B cell (primary cell): ENCODE measurements at regions of chr3 and their contacts with region 1.

Region 1: DNA sequence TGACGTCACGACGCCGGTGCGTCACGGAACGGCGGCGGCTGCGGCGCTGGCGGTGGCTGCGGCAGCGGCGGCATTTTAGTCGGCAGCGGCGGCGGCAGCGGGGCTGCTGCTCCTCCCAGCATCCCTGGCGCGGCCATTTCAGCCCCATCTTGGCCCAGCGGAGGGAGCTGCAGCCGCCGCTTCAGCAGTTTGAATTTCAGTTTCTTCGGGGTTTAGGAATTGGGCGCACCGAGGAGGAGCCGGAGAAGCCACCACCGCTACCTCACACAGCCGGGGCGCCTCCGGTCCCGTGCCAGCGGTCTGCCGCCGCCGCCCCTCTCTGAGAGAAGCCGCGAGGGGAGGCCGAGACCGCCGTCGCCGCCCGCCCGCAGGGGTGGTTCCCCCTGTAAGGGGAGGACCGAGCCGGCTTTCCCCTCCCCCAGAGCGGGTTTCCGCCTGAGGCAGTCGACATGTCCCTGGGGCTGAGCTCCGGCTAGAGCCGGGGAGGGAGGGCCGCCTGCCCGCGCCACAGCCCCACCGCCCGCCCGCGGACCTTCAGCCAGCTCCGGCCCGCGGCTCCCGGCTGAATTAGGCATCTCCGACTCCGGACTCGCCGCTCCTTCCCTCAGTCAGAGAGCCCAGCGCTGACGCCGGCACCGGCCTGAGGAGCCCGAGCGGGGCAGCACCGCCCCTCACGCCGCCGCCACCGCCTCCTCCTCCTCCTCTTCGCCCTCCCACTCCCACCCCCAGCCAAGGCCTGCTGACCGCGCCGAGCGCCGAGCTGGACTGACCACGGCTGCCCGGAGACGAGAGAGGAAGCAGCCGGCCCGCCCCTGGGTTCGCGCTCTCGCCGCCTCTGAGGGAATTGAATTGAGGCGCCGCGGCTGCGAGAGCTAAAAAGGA is at the start of gene TSC22D2:
- DNase-seq: peak; percentile 98
- ATAC-seq: peak; percentile 73
- H3K4me3 ChIP-seq: peak within 1 kb of the TSS; percentile 66 to 88 (median 77)
- H3K4me3 Mint-ChIP-seq: peak within 1 kb of the TSS; percentile 87
- H3K27ac ChIP-seq: peak within 1 kb of the TSS; percentile 91 to 99
- H3K27ac Mint-ChIP-seq: peak within 1 kb of the TSS; percentile 94
- H3K4me1 ChIP-seq: peaks cover 21 to 25% of the 10 kb centered on the region in 2 donors
- H3K4me1 Mint-ChIP-seq: peaks cover 33% of the 10 kb centered on the region
- H3K27me3 ChIP-seq: no peaks in the 10 kb centered on the region
- H3K27me3 Mint-ChIP-seq: no peaks in the 10 kb centered on the region
- CTCF ChIP-seq: no peak
- total RNA-seq, gene TSC22D2: 45.9 and 48.5 TPM in 2 replicates

Region 2: DNA sequence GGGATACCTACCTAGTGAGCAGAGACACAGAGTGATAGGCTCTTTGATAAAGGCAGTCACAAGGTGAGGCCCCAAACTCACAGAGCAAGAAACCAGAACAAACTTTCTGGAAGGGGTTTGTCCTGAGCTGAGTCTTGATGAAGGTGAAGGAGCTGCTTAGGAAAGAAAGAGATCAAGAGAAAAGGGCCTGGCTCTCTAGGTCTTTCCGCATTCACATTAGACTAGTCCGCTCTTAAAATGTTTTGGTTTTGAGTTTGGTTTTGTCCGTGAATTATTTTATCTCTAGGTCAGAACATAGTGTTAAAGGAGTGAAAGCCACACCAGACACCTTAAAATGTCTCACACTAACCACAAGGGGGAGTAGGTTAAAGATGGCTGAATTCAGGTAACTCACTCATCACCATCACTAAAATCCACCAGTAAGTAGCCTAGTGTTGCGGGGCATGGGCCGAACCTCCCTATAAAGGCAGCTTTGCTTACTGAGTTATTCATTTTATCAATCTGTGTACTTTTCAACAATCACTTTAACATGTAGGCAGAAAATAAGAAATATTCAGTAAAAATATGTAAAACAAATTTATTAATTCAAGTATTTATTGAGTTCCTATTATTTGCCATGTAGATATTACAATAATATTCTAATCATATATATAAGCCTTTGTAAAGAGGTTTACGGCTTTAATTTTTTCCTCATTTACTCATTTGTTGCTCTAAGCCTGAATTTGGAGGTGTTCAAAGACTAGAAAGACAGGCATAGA is 121.9 kb before region 1 on chr3:
- CTCF ChIA-PET with region 1: interaction called, 11 read pairs
- POLR2A ChIA-PET with region 1: no interaction called
- intact Hi-C with region 1: loop called (anchors 1 kb)
- DNase-seq: peak; percentile 68
- ATAC-seq: peak; percentile 79
- H3K4me3 ChIP-seq: no peak overlapping the region
- H3K4me3 Mint-ChIP-seq: no peak overlapping the region
- H3K27ac ChIP-seq: no peak overlapping the region
- H3K27ac Mint-ChIP-seq: no peak overlapping the region
- H3K4me1 ChIP-seq: no peaks in the 10 kb centered on the region
- H3K4me1 Mint-ChIP-seq: no peaks in the 10 kb centered on the region
- H3K27me3 ChIP-seq: no peaks in the 10 kb centered on the region
- H3K27me3 Mint-ChIP-seq: peaks cover 27% of the 10 kb centered on the region
- CTCF ChIP-seq: peak; percentile 73

Region 3: DNA sequence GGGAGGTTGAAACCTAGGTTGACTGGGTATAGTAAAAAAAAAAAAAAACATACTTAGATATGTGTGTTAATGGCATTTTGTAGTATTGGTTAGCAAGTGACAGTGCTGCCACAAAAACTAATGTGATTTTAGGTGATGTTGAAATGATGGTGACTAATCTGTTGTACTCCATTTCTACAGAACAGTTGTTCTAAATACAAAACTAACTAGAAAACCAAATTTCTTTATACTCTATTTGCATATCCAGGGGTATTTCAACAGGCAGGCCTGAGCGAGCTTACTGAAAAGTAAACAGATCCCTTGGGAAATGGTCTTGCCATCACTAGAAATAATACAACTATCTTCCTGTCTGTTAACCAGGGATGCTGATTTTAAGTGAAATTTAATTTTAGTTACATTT is 20.1 kb after region 1 on chr3:
- CTCF ChIA-PET with region 1: interaction called, 15 read pairs
- POLR2A ChIA-PET with region 1: interaction called, 3 read pairs
- intact Hi-C with region 1: no loop called
- DNase-seq: no peak
- ATAC-seq: no peak
- H3K4me3 ChIP-seq: no peak overlapping the region
- H3K4me3 Mint-ChIP-seq: no peak overlapping the region
- H3K27ac ChIP-seq: no peak overlapping the region
- H3K27ac Mint-ChIP-seq: no peak overlapping the region
- H3K4me1 ChIP-seq: peaks cover 19 to 32% of the 10 kb centered on the region in 2 donors
- H3K4me1 Mint-ChIP-seq: peaks cover 59% of the 10 kb centered on the region
- H3K27me3 ChIP-seq: no peaks in the 10 kb centered on the region
- H3K27me3 Mint-ChIP-seq: no peaks in the 10 kb centered on the region
- CTCF ChIP-seq: no peak

Region 4: GRCh38 chr3:150515210-150515609 is 106.7 kb after region 1 on chr3:
- CTCF ChIA-PET with region 1: no interaction called
- POLR2A ChIA-PET with region 1: no interaction called
- intact Hi-C with region 1: no loop called
- DNase-seq: no peak
- ATAC-seq: no peak
- H3K4me3 ChIP-seq: no peak overlapping the region
- H3K4me3 Mint-ChIP-seq: no peak overlapping the region
- H3K27ac ChIP-seq: no peak overlapping the region
- H3K27ac Mint-ChIP-seq: no peak overlapping the region
- H3K4me1 ChIP-seq: no peaks in the 10 kb centered on the region
- H3K4me1 Mint-ChIP-seq: no peaks in the 10 kb centered on the region
- H3K27me3 ChIP-seq: peaks cover 0 to 2% (median 0%) of the 10 kb centered on the region in 4 experiments
- H3K27me3 Mint-ChIP-seq: peaks cover 20% of the 10 kb centered on the region
- CTCF ChIP-seq: no peak

Region 5: GRCh38 chr3:150546226-150547044 is 138.0 kb after region 1 on chr3 and contains the starts of genes EIF2A and SERP1:
- CTCF ChIA-PET with region 1: interaction called, 9 read pairs
- POLR2A ChIA-PET with region 1: interaction called, 12 read pairs
- intact Hi-C with region 1: loop called (anchors 1 kb)
- DNase-seq: peak; percentile 100
- ATAC-seq: peak; percentile 90
- H3K4me3 ChIP-seq: peak within 1 kb of the TSS; percentile 67 to 96 (median 86)
- H3K4me3 Mint-ChIP-seq: peak within 1 kb of the TSS; percentile 93
- H3K27ac ChIP-seq: peak within 1 kb of the TSS; percentile 87 to 98
- H3K27ac Mint-ChIP-seq: peak within 1 kb of the TSS; percentile 99
- H3K4me1 ChIP-seq: peaks cover 11 to 21% of the 10 kb centered on the region in 2 donors
- H3K4me1 Mint-ChIP-seq: peaks cover 47% of the 10 kb centered on the region
- H3K27me3 ChIP-seq: no peaks in the 10 kb centered on the region
- H3K27me3 Mint-ChIP-seq: no peaks in the 10 kb centered on the region
- CTCF ChIP-seq: no peak
- total RNA-seq, gene EIF2A: 78.8 and 83.1 TPM in 2 replicates
- total RNA-seq, gene SERP1: 78.0 and 84.6 TPM in 2 replicates

Region 6: GRCh38 chr3:150763122-150763841 is 354.8 kb after region 1 on chr3 and contains the start of gene SIAH2:
- CTCF ChIA-PET with region 1: no interaction called
- POLR2A ChIA-PET with region 1: interaction called, 13 read pairs
- intact Hi-C with region 1: loop called (anchors 1 kb)
- DNase-seq: peak; percentile 95
- ATAC-seq: peak; percentile 74
- H3K4me3 ChIP-seq: peak within 1 kb of the TSS; percentile 74 to 91 (median 86)
- H3K4me3 Mint-ChIP-seq: peak within 1 kb of the TSS; percentile 99
- H3K27ac ChIP-seq: peak within 1 kb of the TSS; percentile 95 to 96
- H3K27ac Mint-ChIP-seq: peak within 1 kb of the TSS; percentile 99
- H3K4me1 ChIP-seq: peaks cover 51 to 56% of the 10 kb centered on the region in 2 donors
- H3K4me1 Mint-ChIP-seq: peaks cover 63% of the 10 kb centered on the region
- H3K27me3 ChIP-seq: peaks cover 0 to 2% (median 0%) of the 10 kb centered on the region in 4 experiments
- H3K27me3 Mint-ChIP-seq: peaks cover 4% of the 10 kb centered on the region
- CTCF ChIP-seq: no peak
- total RNA-seq, gene SIAH2: 22.3 and 22.5 TPM in 2 replicates

Region 7: GRCh38 chr3:150811984-150812383 is 403.5 kb after region 1 on chr3:
- CTCF ChIA-PET with region 1: no interaction called
- POLR2A ChIA-PET with region 1: no interaction called
- intact Hi-C with region 1: no loop called
- DNase-seq: no peak
- ATAC-seq: no peak
- H3K4me3 ChIP-seq: no peak overlapping the region
- H3K4me3 Mint-ChIP-seq: no peak overlapping the region
- H3K27ac ChIP-seq: no peak overlapping the region
- H3K27ac Mint-ChIP-seq: no peak overlapping the region
- H3K4me1 ChIP-seq: no peaks in the 10 kb centered on the region
- H3K4me1 Mint-ChIP-seq: no peaks in the 10 kb centered on the region
- H3K27me3 ChIP-seq: peaks cover 0 to 5% (median 1%) of the 10 kb centered on the region in 4 experiments
- H3K27me3 Mint-ChIP-seq: peaks cover 9% of the 10 kb centered on the region
- CTCF ChIP-seq: no peak